Calu3 (cell line): ENCODE measurements at regions of chr6 and their contacts with region 1.

Region 1: GRCh38 chr6:28838634-28839442 is 84.9 kb downstream of the TRIM27 start:
- DNase-seq: peak; percentile 96
- H3K4me3 Mint-ChIP-seq: peak overlapping the region; percentile 99
- H3K27ac Mint-ChIP-seq: peak overlapping the region; percentile 98
- H3K4me1 Mint-ChIP-seq: peaks cover 9% of the 10 kb centered on the region
- H3K27me3 Mint-ChIP-seq: peaks cover 7% of the 10 kb centered on the region
- CTCF ChIP-seq: peak; percentile 84

Region 2: DNA sequence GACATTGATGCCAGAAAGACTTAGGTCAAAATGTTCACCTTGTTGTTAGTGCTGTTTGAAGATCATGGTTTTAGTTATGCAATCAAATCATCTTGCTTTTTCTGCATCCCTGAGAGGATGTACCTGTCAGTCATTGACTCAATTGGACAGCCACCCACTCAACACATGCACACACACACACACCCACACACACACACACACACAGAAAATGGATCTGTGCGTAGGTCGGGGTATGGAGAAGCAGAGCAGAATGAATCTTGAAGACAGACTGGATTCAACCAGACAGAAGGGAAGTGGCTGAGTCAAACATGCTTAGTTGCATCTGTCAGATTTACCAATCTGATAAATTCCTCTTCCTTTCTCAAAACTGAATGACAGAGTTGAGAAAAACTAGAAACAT is 376.4 kb before region 1 on chr6:
- CTCF ChIA-PET with region 1: no interaction called
- intact Hi-C with region 1: no loop called
- DNase-seq: no peak
- H3K4me3 Mint-ChIP-seq: no peak overlapping the region
- H3K27ac Mint-ChIP-seq: no peak overlapping the region
- H3K4me1 Mint-ChIP-seq: no peaks in the 10 kb centered on the region
- H3K27me3 Mint-ChIP-seq: peaks cover 36% of the 10 kb centered on the region
- CTCF ChIP-seq: no peak

Region 3: DNA sequence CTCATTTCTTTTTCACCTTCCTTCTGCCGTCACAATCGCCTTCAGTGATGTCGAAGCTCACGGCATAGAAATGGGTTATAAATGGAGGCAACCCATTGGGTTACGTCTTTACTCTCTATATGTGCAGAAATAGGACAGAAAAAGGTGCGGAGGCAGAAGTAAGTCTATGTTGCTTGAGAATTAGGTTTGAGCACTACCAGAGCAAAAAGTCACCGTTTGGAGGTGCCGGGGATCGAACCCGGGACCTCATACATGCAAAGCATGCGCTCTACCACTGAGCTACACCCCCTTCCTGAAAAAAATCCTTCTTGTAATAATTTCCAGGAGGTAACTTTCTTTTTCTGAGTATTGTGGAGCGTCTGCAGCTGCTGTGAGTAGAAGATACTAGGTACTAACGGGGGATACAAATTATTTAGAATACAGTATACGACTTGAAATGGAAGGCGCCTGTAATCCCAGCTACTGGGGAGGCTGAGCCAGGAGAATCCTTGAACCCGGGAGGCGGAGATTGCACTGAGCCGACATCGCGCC is 49.2 kb before region 1 on chr6:
- CTCF ChIA-PET with region 1: interaction called, 10 read pairs
- intact Hi-C with region 1: no loop called
- DNase-seq: peak; percentile 59
- H3K4me3 Mint-ChIP-seq: peak overlapping the region; percentile 63
- H3K27ac Mint-ChIP-seq: peak overlapping the region; percentile 78
- H3K4me1 Mint-ChIP-seq: peaks cover 5% of the 10 kb centered on the region
- H3K27me3 Mint-ChIP-seq: peaks cover 45% of the 10 kb centered on the region
- CTCF ChIP-seq: no peak

Region 4: GRCh38 chr6:28895134-28895812 is 56.4 kb after region 1 on chr6:
- CTCF ChIA-PET with region 1: interaction called, 11 read pairs
- intact Hi-C with region 1: loop called (anchors 2 kb)
- DNase-seq: peak; percentile 90
- H3K4me3 Mint-ChIP-seq: peak overlapping the region; percentile 95
- H3K27ac Mint-ChIP-seq: peak overlapping the region; percentile 100
- H3K4me1 Mint-ChIP-seq: no peaks in the 10 kb centered on the region
- H3K27me3 Mint-ChIP-seq: no peaks in the 10 kb centered on the region
- CTCF ChIP-seq: no peak

Region 5: DNA sequence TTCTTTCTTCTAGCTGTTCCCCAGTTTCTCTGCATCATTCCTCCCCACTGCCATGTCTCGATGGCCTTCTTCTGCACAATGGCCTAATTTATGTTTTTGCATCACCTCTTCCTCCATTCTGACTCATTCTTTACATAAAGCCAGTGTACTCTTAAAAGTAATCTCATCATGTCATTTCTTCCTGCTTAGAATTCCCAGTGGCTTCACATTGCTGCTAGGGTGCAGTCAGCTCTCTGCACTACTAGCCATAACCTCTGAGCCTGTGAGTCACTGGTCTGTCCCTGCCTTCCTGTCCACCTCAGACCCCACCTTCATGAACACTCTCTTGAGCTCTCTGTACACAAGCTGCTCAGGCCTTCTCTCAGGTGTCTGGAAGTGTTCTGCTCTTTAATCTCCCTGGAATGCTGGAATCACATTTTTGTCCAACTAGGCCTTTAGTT is 109.0 kb after region 1 on chr6:
- CTCF ChIA-PET with region 1: interaction called, 11 read pairs
- intact Hi-C with region 1: no loop called
- DNase-seq: peak; percentile 76
- H3K4me3 Mint-ChIP-seq: peak overlapping the region; percentile 3
- H3K27ac Mint-ChIP-seq: peak overlapping the region; percentile 78
- H3K4me1 Mint-ChIP-seq: peaks cover 44% of the 10 kb centered on the region
- H3K27me3 Mint-ChIP-seq: no peaks in the 10 kb centered on the region
- CTCF ChIP-seq: no peak

Region 6: GRCh38 chr6:29016559-29017427 is 178.0 kb after region 1 on chr6:
- CTCF ChIA-PET with region 1: interaction called, 58 read pairs
- intact Hi-C with region 1: loop called (anchors 1 kb)
- DNase-seq: peak; percentile 88
- H3K4me3 Mint-ChIP-seq: peak overlapping the region; percentile 90
- H3K27ac Mint-ChIP-seq: peak overlapping the region; percentile 62
- H3K4me1 Mint-ChIP-seq: peaks cover 8% of the 10 kb centered on the region
- H3K27me3 Mint-ChIP-seq: peaks cover 4% of the 10 kb centered on the region
- CTCF ChIP-seq: peak; percentile 92